ENCODE measurements at regions of chr16 and their contacts with region 1.

Region 1: DNA sequence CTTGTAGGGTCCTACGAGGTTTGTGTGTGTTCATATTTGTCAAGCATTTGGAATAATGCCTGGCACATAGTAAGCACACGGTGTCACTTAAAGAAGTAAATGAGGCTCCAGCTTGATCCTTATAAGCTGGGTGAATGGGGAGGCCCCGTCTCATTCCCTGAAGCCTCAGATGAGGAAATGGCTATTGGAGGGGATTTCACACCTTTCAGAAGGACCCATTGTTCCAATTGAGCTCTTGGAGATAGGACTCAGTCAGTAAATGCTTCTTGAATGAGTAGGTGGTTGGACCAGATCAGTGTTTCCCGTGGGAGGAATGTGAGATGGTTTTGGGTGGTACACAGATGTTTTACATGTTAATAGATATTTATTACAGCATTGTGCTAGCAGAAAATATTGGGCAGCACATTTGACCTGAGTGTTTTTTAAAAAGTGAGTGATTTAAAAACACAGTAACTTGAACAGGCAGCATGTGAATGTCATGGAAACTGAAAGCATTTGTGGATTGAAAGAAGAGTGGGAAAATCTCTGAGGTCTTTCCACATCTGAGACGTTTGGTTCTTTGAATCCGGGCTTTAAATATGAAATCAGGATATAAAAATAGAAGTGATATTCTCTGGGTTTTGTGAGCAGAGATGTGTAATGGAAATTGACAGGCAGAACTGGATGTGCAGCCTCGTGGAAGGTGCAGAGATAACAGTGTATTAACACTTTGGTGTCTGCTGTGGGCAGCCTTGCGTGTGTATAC is 36.4 kb upstream of the ARHGAP17 start:
- DNase-seq: no peak
- ATAC-seq: no peak
- H3K4me3 ChIP-seq: no peak overlapping the region
- H3K27ac ChIP-seq: peak overlapping the region; percentile 27 to 91
- H3K4me1 ChIP-seq: peaks cover 14 to 29% of the 10 kb centered on the region in 2 donors
- H3K27me3 ChIP-seq: no peaks in the 10 kb centered on the region
- CTCF ChIP-seq: no peak

Region 2: DNA sequence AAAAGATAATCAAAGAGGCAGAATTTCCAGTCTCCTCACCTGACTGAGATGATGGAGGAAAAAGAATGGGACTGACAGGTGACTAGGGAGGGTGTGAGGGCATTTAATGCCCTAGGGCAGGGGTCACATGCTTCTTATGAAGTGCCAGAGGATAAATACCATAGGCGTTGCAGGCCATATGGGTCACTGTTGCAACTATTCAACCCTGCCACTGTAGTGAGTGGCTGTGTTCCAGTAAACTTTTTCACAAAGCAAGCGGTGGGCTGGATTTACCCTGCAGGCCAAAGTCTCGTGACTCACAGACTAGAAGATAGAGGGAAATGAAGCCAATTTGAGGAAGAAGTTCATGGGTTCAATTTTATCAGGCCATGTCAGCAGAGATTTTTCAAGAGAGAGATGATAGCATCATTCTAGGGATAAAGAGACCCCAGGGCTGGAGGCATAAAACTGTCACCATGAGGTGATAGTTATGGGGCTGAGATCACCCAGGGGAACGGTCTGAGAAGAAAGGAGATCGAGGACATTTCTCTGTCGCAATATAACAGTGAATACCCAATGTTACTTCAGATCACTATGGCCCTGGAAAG is 45.0 kb before region 1 on chr16:
- intact Hi-C with region 1: no loop called
- DNase-seq: peak in 1 of 4 donors; percentile 54
- ATAC-seq: peak; percentile 56
- H3K4me3 ChIP-seq: no peak overlapping the region
- H3K27ac ChIP-seq: peak overlapping the region in 1 of 2 donors; percentile 28
- H3K4me1 ChIP-seq: peaks cover 24 to 80% of the 10 kb centered on the region in 2 donors
- H3K27me3 ChIP-seq: no peaks in the 10 kb centered on the region
- CTCF ChIP-seq: no peak

Region 3: GRCh38 chr16:25126820-25127232 is 75.2 kb after region 1 on chr16:
- intact Hi-C with region 1: loop called in 1 of 2 experiments (anchors 10 kb)
- DNase-seq: peak in 2 of 4 donors; percentile 13 to 55
- ATAC-seq: peak; percentile 98
- H3K4me3 ChIP-seq: no peak overlapping the region
- H3K27ac ChIP-seq: no peak overlapping the region
- H3K4me1 ChIP-seq: peaks cover 0 to 4% of the 10 kb centered on the region in 2 donors
- H3K27me3 ChIP-seq: no peaks in the 10 kb centered on the region
- CTCF ChIP-seq: peak; percentile 21 to 49

Region 4: GRCh38 chr16:25235991-25236390 is 184.4 kb after region 1 on chr16:
- intact Hi-C with region 1: loop called in 1 of 2 experiments (anchors 10 kb)
- DNase-seq: no peak
- ATAC-seq: no peak
- H3K4me3 ChIP-seq: no peak overlapping the region
- H3K27ac ChIP-seq: no peak overlapping the region
- H3K4me1 ChIP-seq: no peaks in the 10 kb centered on the region
- H3K27me3 ChIP-seq: no peaks in the 10 kb centered on the region
- CTCF ChIP-seq: no peak